ENCODE measurements at regions of chr14 and their contacts with region 1.

Region 1: DNA sequence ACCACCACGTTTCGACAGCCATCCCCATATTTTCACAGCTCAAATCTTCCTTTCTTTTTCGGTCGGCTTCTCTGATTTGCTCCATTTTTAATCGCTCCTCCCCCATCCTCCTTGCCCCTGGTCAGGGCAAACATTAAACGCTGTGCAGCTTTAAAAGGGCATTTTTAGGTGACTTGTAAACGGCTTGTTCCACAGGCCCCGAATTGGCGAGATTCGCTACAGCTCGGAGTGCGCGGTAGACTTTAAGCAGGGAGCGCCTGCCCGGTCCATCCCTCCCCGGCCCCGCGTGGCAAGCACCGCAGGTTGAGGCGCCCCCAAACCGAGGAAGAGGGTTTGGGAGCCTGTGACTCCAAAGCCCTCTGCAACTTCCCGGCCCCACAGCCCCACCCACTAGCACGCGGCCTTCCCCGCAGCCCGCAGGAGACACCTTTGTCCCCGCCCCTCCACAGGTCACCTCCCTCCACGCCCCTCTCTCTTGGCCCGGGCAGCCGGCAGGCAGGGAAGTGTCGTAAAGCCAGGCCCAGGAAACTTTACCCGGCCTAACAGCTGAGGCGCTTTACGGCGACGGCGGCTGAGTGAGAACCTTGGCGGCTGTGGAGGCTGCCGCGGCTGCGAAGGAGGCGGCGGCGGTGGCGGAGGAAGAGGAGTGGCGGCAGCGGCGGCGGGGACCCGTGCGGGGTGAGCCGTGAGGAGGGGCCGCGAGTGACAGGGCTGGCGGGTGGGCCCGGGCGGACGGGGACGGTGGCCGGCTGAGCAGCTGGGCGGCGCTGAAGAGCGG is at the start of gene NAA30:
- DNase-seq: peak; percentile 91
- H3K4me3 Mint-ChIP-seq: peak within 1 kb of the TSS; percentile 97
- H3K27ac Mint-ChIP-seq: peak within 1 kb of the TSS; percentile 94
- H3K4me1 Mint-ChIP-seq: peaks cover 49% of the 10 kb centered on the region
- H3K27me3 Mint-ChIP-seq: peaks cover 2% of the 10 kb centered on the region
- total RNA-seq, gene NAA30: 20.8 and 20.9 TPM in 2 replicates

Region 2: DNA sequence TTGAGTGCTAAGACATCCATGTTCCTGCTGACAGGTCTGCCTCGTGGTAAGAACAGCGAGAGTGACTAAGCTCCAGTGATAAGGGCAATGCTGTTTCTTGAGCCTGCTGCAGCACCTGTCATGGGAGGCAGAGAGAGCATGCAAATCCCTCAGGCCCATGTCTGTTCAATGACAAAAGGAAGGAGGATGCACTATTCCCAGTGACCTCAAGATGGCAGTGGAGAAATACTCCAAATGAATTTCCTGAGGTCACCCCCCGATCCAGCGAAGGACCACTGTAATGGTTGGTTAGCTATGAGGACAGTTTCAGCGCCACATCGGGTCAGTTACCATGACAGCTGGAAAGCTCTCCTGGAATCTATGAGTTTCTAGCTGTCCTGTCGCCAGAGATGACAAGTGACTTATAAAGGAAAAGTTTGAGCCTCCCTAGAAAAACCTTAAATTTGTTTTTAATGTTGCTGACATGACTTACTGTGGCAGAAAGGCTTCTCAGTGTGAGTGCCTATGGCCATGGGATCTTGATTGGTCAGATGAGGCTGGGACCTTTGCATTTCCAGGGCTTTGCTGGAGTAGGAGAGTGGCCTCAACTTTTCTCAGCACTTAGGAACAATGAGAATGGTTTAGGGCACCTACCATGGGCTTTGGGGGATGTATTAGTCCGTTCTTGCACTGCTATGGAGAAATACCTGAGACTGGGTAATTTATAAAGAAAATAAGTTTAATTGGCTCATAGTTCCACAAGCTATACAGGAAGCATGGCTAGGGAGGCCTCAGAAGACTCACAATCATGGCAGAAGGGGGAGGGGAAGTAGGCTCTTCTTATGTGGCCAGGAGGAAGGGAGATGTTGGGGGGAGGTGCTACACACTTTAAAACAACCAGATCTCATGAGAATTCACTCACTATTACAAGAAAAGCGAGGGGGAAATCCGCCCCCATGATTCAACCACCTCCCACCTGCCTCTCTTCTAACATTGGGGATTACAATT is 898.6 kb before region 1 on chr14:
- intact Hi-C with region 1: loop called (anchors 5 kb)
- DNase-seq: peak; percentile 2
- H3K4me3 Mint-ChIP-seq: no peak overlapping the region
- H3K27ac Mint-ChIP-seq: no peak overlapping the region
- H3K4me1 Mint-ChIP-seq: peaks cover 7% of the 10 kb centered on the region
- H3K27me3 Mint-ChIP-seq: no peaks in the 10 kb centered on the region

Region 3: DNA sequence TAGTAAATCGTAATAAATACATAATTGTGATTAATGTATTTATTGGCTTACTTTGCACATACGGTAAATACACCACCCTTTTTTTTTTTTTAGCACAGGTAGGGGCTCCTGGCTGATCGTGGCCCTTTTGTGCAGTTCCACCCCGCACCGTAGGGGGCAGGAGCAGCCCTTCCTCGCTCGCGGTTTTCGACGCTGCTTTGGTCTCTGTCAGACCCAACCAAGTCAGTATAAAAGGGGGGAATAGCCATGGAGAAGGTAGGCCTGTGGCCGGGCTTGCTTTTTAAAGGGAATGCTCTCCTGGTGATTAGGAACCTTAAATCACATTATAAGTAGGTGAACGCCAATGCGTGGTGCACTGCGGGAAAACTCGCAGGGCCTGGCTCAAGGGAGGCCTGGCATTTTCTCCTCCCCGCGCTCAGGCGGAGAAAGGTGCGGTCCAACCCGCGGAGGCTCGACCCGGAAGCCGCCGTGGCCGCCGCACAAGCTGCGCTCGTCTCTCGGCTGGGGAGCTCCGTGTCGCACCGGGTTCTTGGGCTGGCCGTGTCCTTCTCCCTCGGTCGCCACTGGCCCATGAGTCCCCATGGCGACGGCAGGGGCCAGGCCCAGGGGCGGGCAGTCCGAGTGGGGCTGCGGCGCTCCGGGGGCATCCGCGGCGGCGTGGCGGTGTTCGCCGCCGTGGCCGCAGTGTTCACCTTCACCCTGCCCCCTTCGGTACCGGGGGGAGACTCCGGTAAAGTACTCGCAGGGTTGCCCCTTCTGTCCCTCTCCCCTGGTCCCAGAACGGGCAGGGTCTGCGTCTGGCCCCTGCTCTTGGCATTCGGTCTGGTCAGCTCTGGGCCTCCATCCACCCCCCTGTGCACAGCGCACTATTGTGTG is 810.6 kb before region 1 on chr14 and contains the start of gene TMEM260:
- intact Hi-C with region 1: loop called (anchors 5 kb)
- DNase-seq: peak; percentile 84
- H3K4me3 Mint-ChIP-seq: peak within 1 kb of the TSS; percentile 91
- H3K27ac Mint-ChIP-seq: peak within 1 kb of the TSS; percentile 91
- H3K4me1 Mint-ChIP-seq: peaks cover 32% of the 10 kb centered on the region
- H3K27me3 Mint-ChIP-seq: peaks cover under 1% of the 10 kb centered on the region
- total RNA-seq, gene TMEM260: 14.2 and 17.2 TPM in 2 replicates

Region 4: DNA sequence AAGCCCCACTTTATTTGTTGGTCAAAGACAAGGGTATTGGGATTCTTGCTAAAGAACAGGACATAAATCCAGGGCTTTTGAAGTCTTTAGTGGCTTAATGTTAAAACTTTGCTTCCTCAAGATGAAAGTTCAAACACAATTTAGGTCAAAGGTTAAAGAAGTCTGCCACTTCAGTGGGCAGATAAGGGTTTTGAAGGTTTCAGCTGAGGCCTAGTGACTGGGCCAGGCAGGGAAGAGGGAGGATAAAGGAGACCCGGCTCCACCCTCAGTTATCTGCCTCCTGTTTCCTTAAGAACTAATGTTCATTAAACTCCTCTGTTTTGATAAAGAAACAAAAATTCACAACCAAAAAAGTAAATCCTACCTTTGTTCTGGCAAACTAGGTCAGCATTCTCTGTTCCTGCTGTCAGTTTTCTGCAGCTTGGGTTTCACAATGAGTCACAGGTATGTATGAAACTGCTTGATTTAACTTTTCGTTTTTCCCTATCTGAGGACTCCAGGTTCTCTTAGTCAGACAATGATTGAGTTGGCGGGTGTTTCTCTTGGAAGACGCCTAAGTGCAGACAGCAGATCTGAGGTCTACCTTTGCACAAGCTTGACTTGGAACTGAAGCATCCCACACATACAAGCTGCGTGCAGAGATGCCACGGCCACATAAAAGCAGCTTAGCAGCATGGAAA is 329.8 kb before region 1 on chr14:
- intact Hi-C with region 1: loop called (anchors 2 kb)
- DNase-seq: peak; percentile 9
- H3K4me3 Mint-ChIP-seq: peak overlapping the region; percentile 37
- H3K27ac Mint-ChIP-seq: peak overlapping the region; percentile 85
- H3K4me1 Mint-ChIP-seq: peaks cover 48% of the 10 kb centered on the region
- H3K27me3 Mint-ChIP-seq: peaks cover 15% of the 10 kb centered on the region

Region 5: GRCh38 chr14:57268161-57269069 is 121.8 kb before region 1 on chr14 and contains the starts of genes AP5M1 and EXOC5:
- intact Hi-C with region 1: loop called (anchors 1 kb)
- DNase-seq: peak; percentile 92
- H3K4me3 Mint-ChIP-seq: peak within 1 kb of the TSS; percentile 99
- H3K27ac Mint-ChIP-seq: peak within 1 kb of the TSS; percentile 100
- H3K4me1 Mint-ChIP-seq: peaks cover 60% of the 10 kb centered on the region
- H3K27me3 Mint-ChIP-seq: no peaks in the 10 kb centered on the region
- total RNA-seq, gene AP5M1: 38.7 and 48.2 TPM in 2 replicates
- total RNA-seq, gene EXOC5: 75.9 and 76.6 TPM in 2 replicates

Region 6: GRCh38 chr14:57486767-57487379 is 96.7 kb after region 1 on chr14:
- intact Hi-C with region 1: no loop called
- DNase-seq: no peak
- H3K4me3 Mint-ChIP-seq: no peak overlapping the region
- H3K27ac Mint-ChIP-seq: no peak overlapping the region
- H3K4me1 Mint-ChIP-seq: no peaks in the 10 kb centered on the region
- H3K27me3 Mint-ChIP-seq: peaks cover 2% of the 10 kb centered on the region

Region 7: DNA sequence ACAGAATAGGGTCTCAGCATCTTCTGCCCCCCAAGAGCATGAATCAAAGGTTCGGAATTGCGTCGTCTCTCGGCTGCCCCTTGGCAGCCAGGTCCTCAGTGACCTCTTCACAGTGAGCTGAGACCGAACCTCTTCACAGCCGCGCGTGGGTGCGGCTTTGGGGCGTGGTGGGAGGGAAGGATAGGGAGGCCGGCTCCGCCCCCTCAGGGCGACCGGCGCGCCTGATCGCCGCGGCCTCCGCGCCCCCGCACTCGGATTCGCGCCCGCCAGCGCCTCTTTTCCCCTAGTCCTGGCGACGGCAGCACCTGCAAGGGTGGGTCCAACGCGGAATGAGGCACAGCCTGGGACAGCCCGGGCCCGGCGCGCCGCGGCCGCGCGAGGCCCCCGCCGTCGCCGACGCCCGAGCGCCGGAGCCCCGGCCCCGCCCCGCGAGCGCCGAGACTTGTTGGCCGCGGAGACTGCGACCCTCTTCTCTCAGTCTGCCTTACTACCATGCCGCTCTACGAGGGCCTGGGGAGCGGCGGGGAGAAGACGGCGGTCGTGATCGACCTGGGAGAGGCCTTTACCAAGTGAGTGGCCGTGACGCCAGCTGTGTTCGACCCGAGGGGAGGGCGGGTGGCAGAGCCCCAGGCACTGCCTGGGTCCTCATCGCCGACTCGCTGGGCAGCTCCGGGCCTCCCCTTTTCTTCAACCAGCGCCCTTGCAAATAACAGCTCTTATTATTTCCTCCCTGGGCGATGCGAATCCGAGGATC is 809.7 kb after region 1 on chr14 and contains the start of gene ACTR10:
- intact Hi-C with region 1: loop called (anchors 5 kb)
- DNase-seq: peak; percentile 80
- H3K4me3 Mint-ChIP-seq: peak within 1 kb of the TSS; percentile 93
- H3K27ac Mint-ChIP-seq: peak within 1 kb of the TSS; percentile 86
- H3K4me1 Mint-ChIP-seq: peaks cover 24% of the 10 kb centered on the region
- H3K27me3 Mint-ChIP-seq: peaks cover 1% of the 10 kb centered on the region
- total RNA-seq, gene ACTR10: 38.3 and 40.3 TPM in 2 replicates

Measured in activated T-helper 1 cell treated with anti-CD3 and anti-CD28 coated beads, Interleukin-12 subunit alpha, Interleukin-12 subunit beta, Interleukin-2, Interleukin-4 antibody, amounts not matched to agents 30 ng/mL and 10 ng/mL and 1 ng/mL, durations not matched to agents 14 hours and 24 hours and 36 hours (primary cell).